Right ventricle myocardium superior (tissue), 1 donor: ENCODE measurements at regions of chr1 and their contacts with region 1.

Region 1: GRCh38 chr1:175373786-175374623 is 181.4 kb upstream of the KIAA0040 start:
- DNase-seq: no peak
- ATAC-seq: peak; percentile 79

Region 2: GRCh38 chr1:175504875-175505555 is 131.0 kb after region 1 on chr1:
- intact Hi-C with region 1: no loop called
- DNase-seq: peak; percentile 53
- ATAC-seq: peak; percentile 72

Region 3: GRCh38 chr1:175572932-175573862 is 199.2 kb after region 1 on chr1:
- intact Hi-C with region 1: no loop called
- DNase-seq: no peak
- ATAC-seq: no peak

Region 4: DNA sequence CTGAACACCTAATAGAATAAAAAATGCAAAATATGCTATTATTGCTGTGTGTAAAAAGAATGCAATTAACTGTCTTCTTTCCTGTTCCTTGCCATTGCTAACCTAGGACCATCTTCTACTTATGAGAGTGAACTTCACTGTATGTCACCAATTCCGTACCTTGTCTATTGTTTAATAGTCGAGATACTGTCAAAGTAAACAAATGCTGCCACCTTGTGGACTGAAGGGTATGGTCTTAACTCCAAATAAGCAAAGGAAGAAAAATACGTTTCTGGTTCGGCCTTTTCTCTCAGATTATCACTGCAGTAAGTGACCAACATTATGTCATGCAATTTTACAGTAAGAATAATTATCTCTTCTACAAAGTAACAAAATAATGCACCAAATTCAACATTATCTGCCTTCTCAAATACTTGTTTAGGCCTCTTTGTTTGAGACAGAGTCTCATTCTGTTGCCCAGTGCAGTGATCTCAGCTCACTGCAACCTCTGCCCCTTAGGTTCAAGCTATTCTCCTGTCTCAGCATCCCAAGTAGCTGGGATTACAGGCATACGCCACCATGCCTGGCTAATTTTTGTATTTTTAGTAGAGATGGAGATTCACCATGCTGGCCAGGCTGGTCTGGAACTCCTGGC is 699.6 kb after region 1 on chr1:
- intact Hi-C with region 1: loop called (anchors 10 kb)
- DNase-seq: no peak
- ATAC-seq: peak; percentile 68